Heart left ventricle (tissue), 16 donors: ENCODE measurements at regions of chr11 and their contacts with region 1.

Region 1: GRCh38 chr11:35485656-35486322 is 39.6 kb downstream of the PAMR1 start:
- DNase-seq: peak; percentile 59 to 80 (median 67)
- ATAC-seq: peak; percentile 55 to 95 (median 85)
- H3K4me3 ChIP-seq: no peak overlapping the region
- H3K27ac ChIP-seq: no peak overlapping the region
- H3K4me1 ChIP-seq: peaks cover 0 to 14% (median 1%) of the 10 kb centered on the region in 12 donors
- H3K27me3 ChIP-seq: peaks cover 0 to 27% (median 0%) of the 10 kb centered on the region in 9 donors
- CTCF ChIP-seq: peak; percentile 82 to 97 (median 90)
- POLR2A ChIP-seq: no peak

Region 2: GRCh38 chr11:34926101-34926830 is 559.5 kb before region 1 on chr11:
- intact Hi-C with region 1: loop called in 4 of 10 experiments (anchors 5 to 10 kb)
- DNase-seq: no peak
- ATAC-seq: peak in 3 of 4 donors; percentile 58 to 78 (median 77)
- H3K4me3 ChIP-seq: no peak overlapping the region
- H3K27ac ChIP-seq: peak overlapping the region in 1 of 12 donors; percentile 34
- H3K4me1 ChIP-seq: peaks cover 0 to 59% (median 27%) of the 10 kb centered on the region in 12 donors
- H3K27me3 ChIP-seq: no peaks in the 10 kb centered on the region
- CTCF ChIP-seq: peak; percentile 58 to 83 (median 70)
- POLR2A ChIP-seq: no peak

Region 3: DNA sequence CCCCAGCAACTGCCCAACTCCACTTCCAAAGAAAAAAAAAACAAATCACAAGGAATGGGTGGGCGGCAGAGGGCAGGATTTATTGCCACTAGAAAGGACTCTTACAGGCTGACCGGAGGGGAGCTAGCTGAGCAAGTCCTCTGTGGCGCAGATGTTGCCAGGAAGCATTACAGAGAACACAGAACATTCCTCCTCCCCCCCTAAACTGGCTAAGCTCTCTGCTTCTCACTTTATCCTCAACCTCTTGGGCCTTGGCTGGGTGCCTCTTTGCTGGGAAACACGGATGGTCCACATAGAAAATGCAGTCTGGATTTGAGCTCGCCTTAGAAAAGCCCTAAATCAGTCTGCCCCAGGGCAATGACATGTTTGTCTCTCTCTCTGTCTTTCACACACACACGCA is 119.9 kb after region 1 on chr11:
- intact Hi-C with region 1: loop called in 2 of 10 experiments (anchors 10 kb)
- DNase-seq: peak in 4 of 5 donors; percentile 31 to 55 (median 34)
- ATAC-seq: peak; percentile 67 to 75 (median 68)
- H3K4me3 ChIP-seq: no peak overlapping the region
- H3K27ac ChIP-seq: no peak overlapping the region
- H3K4me1 ChIP-seq: peaks cover 0 to 11% (median 0%) of the 10 kb centered on the region in 12 donors
- H3K27me3 ChIP-seq: peaks cover 0 to 55% (median 6%) of the 10 kb centered on the region in 9 donors
- CTCF ChIP-seq: no peak
- POLR2A ChIP-seq: no peak

Region 4: DNA sequence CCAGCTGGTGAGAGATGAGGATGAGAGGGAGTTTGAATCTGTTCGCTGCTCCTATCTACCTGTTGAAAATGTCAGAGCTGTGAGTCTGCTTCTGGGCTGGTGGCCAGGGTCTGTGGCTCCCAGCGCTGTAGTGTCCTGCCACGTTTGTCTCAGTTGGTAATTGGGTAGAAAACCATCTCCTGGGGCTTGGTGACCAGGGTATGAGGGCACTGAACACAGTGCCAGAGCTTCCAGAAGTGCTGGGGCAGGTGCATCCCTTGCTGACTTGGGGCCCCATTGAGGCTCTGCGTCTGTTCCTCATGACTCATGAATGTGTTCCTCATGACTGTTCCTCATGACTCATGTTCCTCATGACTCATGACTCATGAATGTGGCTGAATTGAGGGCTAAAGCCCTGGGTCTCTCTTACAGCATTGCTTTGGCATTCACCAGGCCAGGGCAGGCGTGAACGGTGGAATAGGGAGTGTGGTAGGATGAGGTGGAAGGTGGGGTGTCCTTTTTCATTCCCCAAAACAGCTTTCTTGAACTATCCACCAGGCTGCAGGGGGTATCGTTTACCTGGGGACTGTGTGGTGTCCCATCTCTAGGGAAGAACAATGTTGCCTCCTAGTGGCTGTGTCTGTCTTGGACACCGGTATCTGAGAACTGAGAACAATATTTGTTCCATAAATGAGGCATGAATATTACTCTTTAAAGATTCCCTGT is 663.9 kb after region 1 on chr11:
- intact Hi-C with region 1: loop called in 1 of 10 experiments (anchors 10 kb)
- DNase-seq: peak in 2 of 5 donors; percentile 32 to 66
- ATAC-seq: peak; percentile 42 to 97 (median 81)
- H3K4me3 ChIP-seq: no peak overlapping the region
- H3K27ac ChIP-seq: peak overlapping the region in 1 of 12 donors; percentile 70
- H3K4me1 ChIP-seq: peaks cover 0 to 22% (median under 1%) of the 10 kb centered on the region in 12 donors
- H3K27me3 ChIP-seq: no peaks in the 10 kb centered on the region
- CTCF ChIP-seq: peak in 10 of 12 donors; percentile 11 to 48 (median 33)
- POLR2A ChIP-seq: peak in 1 of 2 donors; percentile 8

Region 5: GRCh38 chr11:36258730-36259360 is 773.1 kb after region 1 on chr11:
- intact Hi-C with region 1: loop called in 6 of 10 experiments (anchors 5 to 10 kb)
- DNase-seq: peak; percentile 44 to 73 (median 55)
- ATAC-seq: peak; percentile 59 to 92 (median 81)
- H3K4me3 ChIP-seq: no peak overlapping the region
- H3K27ac ChIP-seq: no peak overlapping the region
- H3K4me1 ChIP-seq: peaks cover 0 to 6% (median 0%) of the 10 kb centered on the region in 12 donors
- H3K27me3 ChIP-seq: peaks cover 0 to 15% (median 0%) of the 10 kb centered on the region in 9 donors
- CTCF ChIP-seq: peak; percentile 42 to 70 (median 56)
- POLR2A ChIP-seq: no peak

Region 6: DNA sequence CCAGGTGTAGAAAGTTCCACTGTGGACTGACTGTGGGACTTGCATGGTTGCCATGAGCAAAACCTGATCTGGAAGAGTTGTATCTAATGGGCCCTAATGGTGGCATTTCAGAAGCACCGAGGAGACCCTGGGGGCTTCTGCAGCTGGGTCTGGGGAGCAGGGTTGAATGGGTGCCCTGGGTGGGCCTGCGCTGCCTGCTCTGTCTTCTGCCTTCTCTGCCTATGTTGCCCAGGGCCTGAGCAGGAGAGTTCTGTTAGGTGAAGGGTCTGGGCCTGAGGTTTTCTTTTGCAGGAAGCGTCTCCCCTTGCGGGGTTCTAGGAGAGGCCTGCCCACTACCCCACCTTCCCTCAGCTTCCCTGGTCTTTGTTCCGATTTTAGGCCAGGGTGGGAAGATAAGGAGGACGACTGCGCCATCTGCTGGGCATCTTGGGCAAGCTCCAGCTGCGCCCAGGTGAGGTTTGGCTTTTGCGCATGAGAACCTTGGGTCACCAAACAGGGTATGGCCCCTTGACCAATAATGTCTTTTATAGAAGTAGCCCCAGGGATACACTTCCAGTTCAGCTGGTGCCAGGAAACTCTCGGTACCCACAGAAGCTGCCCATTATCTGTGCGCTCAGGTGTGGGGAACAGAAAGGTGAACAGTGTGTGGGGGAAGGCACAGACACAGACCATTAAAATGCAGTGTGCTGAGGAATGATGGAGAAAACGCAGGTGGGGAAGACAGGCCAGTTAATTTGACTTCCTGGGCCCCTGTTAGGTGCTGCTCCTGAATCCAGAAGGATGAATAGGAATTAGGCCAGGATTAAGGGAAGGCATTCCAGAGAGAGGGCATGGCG is 780.2 kb after region 1 on chr11:
- intact Hi-C with region 1: loop called in 6 of 10 experiments (anchors 5 to 10 kb)
- DNase-seq: peak; percentile 16 to 72 (median 44)
- ATAC-seq: peak; percentile 34 to 76 (median 72)
- H3K4me3 ChIP-seq: no peak overlapping the region
- H3K27ac ChIP-seq: no peak overlapping the region
- H3K4me1 ChIP-seq: peaks cover 0 to 3% (median 0%) of the 10 kb centered on the region in 12 donors
- H3K27me3 ChIP-seq: peaks cover 0 to 7% (median 0%) of the 10 kb centered on the region in 9 donors
- CTCF ChIP-seq: peak; percentile 63 to 84 (median 74)
- POLR2A ChIP-seq: no peak